ENCODE measurements at regions of chr6 and their contacts with region 1.

Region 1: DNA sequence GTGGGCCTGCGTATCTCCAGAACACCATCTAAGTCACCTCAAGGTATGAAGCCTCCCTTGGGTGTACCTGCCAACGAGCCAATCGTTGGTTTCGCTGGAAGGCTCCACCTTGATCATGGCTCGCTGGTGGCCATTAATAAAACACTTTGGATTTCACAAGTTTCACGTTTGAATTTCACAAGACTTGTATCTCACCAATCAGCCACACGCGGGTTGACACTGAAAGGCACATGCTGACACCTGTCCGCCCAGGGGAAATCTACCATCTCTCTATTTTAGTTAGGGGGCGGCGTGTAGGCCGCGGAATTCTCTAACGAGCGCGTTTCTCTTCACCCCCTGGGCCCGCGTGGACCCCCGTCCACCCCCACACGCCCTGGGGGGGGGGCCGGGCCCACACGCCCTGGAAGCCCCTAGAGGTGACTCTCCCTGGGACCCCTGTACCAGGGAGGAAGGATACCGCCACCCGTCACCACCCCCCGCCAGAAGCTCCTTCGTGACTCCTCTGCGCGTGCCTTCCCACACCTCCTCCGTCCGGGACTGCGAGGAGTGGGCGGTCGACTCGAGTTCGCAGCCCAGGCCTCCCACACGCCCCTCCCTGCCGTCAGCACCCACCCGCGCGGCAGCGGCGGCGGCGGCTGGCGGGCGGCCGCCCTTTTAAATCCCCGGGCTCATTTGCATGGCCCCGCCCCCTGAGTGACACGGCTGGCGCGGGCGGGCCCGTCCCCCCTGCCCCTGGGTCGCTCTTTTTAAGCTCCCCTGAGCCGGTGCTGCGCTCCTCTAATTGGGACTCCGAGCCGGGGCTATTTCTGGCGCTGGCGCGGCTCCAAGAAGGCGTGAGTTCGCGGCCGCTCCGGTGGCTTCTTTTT is at the start of gene HMGA1:
- DNase-seq: peak; percentile 94
- ATAC-seq: peak; percentile 70
- H3K4me3 Mint-ChIP-seq: peak within 1 kb of the TSS; percentile 85
- H3K27ac Mint-ChIP-seq: peak within 1 kb of the TSS; percentile 91
- H3K4me1 Mint-ChIP-seq: peaks cover 41% of the 10 kb centered on the region
- H3K27me3 Mint-ChIP-seq: no peaks in the 10 kb centered on the region
- total RNA-seq, gene HMGA1: 569 to 649 TPM

Region 2: DNA sequence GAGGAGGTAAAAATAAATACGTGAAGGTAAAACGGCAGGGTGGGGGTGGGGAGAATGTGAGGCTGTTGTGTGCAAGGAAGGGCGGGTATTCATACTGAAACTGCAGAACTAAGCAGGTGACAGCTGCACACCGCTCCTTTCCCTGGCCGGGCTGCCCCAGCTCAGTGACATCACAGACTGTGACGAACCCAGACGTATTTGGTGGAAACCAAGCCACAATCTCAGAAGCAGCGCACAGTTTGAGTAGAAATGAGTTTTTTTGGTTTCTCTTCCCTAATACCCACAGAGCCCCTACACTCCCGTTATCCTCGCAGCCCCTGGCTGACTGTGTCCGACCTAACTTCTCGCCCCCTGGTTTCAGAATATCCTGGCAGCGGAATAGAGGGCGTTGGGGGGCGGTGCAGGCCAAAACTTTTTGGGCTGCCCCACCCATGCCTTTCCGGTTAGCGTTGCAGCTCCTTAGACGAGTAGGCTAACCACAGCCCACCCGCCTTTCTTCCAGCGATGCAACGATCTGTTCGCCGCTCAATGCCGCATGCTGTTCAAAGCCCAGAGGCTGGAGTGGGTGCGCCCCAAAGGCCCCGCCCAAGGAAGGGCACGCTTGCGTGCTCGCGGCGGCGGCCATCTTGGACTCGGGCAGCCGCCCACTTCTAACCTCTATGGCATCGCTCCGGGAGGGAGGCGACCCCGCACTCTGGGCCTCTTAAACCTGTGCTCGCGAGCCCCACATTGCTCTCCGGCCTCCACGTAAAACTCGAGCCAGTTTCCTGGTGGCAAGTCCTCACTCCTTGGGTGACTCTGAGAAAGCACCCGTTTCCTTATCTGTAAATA is 665.3 kb before region 1 on chr6:
- CTCF ChIA-PET with region 1: no interaction called
- POLR2A ChIA-PET with region 1: no interaction called
- intact Hi-C with region 1: loop called in 1 of 2 experiments (anchors 2 kb)
- DNase-seq: peak; percentile 98
- ATAC-seq: peak; percentile 90
- H3K4me3 Mint-ChIP-seq: peak overlapping the region; percentile 81
- H3K27ac Mint-ChIP-seq: peak overlapping the region; percentile 100
- H3K4me1 Mint-ChIP-seq: peaks cover 42% of the 10 kb centered on the region
- H3K27me3 Mint-ChIP-seq: no peaks in the 10 kb centered on the region

Region 3: DNA sequence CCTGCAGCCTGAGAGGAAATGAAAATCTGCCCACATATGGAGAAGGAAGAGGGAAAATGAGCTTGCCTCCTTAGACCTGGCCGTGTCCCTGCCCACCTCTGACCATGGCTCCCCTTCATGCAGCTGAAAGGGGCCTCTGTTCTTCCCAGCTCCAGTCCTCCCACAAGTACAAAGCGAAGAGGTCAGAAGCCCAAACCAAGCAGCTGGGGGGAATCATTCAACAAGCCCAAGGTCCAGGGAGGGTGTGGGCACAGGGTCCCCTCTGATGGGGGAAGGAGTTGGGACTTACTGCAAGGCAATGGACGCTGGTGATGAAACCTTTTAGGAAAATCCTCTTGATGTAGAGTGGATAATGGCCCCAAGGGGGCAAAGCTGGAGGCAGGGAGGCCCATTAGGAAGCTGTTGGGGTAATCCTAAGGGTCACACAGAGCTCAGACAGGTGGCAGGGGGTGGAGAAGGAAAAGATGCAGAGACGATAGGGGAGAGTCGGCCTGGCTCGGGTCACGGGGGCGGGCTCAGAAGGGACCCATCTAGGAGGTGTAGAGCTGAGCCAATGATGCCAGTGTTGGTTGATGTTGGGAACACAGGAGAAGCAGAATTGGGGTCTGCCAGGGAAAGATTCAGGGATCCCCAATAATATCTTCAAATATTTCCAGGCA is 74.4 kb before region 1 on chr6:
- CTCF ChIA-PET with region 1: no interaction called
- POLR2A ChIA-PET with region 1: no interaction called
- intact Hi-C with region 1: loop called in 1 of 2 experiments (anchors 2 kb)
- DNase-seq: no peak
- ATAC-seq: no peak
- H3K4me3 Mint-ChIP-seq: no peak overlapping the region
- H3K27ac Mint-ChIP-seq: no peak overlapping the region
- H3K4me1 Mint-ChIP-seq: no peaks in the 10 kb centered on the region
- H3K27me3 Mint-ChIP-seq: no peaks in the 10 kb centered on the region

Region 4: DNA sequence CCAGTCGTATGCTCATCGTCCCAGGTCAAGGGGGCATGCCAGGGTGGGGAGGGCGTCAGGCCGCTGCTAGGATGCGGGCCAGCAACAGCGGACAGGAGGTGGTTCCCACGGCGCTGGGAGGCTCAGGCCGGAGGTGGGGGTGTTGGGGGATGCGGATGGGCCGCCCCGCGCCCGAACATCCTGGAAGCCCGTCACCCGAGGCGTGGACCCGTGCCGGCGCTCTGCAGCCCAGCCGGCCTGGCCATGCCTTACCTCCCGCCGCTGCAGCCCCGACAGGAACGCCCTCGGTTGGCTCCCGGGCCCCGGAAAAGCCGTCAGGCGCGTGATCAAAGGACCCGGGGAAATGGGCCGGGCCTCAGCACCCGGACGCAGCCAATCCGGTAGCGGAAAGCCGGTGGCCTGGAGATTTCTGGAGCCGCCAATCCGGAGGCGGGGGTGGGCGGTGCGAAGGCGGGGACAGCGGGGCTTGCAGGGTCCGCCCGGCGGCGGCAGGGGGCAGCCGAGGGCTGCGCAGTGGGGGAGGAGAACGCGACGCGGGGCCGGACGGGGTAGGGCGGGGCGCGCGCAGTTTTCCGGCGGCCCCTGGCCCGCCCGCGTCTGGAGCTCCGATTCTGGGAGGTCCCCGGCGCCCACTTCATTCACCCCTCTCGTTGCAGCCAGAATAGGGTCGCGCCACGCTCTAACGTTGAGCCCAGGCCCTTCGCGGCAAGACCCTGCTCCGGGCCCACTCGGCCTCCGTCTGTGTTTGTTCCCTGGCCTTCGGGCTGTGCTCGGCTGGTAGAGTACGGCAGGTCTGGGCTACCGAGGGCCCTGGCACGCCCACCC is 12.6 kb after region 1 on chr6 and contains the start of gene SMIM29:
- CTCF ChIA-PET with region 1: interaction called, 5 read pairs
- POLR2A ChIA-PET with region 1: interaction called, 9 read pairs
- intact Hi-C with region 1: loop called in 1 of 2 experiments (anchors 1 kb)
- DNase-seq: peak; percentile 99
- ATAC-seq: peak; percentile 83
- H3K4me3 Mint-ChIP-seq: peak within 1 kb of the TSS; percentile 76
- H3K27ac Mint-ChIP-seq: peak within 1 kb of the TSS; percentile 85
- H3K4me1 Mint-ChIP-seq: peaks cover 43% of the 10 kb centered on the region
- H3K27me3 Mint-ChIP-seq: no peaks in the 10 kb centered on the region
- total RNA-seq, gene SMIM29: 15.8 to 16.3 TPM

Region 5: GRCh38 chr6:34757687-34758274 is 521.4 kb after region 1 on chr6:
- CTCF ChIA-PET with region 1: no interaction called
- POLR2A ChIA-PET with region 1: no interaction called
- intact Hi-C with region 1: loop called in 1 of 2 experiments (anchors 5 kb)
- DNase-seq: no peak
- ATAC-seq: no peak
- H3K4me3 Mint-ChIP-seq: no peak overlapping the region
- H3K27ac Mint-ChIP-seq: no peak overlapping the region
- H3K4me1 Mint-ChIP-seq: peaks cover 12% of the 10 kb centered on the region
- H3K27me3 Mint-ChIP-seq: no peaks in the 10 kb centered on the region

Measured in activated CD4-positive, alpha-beta T cell treated with anti-CD3 and anti-CD28 coated beads for 36 hours (primary cell).